HEK293 (cell line): ENCODE measurements at regions of chr3 and their contacts with region 1.

Region 1: DNA sequence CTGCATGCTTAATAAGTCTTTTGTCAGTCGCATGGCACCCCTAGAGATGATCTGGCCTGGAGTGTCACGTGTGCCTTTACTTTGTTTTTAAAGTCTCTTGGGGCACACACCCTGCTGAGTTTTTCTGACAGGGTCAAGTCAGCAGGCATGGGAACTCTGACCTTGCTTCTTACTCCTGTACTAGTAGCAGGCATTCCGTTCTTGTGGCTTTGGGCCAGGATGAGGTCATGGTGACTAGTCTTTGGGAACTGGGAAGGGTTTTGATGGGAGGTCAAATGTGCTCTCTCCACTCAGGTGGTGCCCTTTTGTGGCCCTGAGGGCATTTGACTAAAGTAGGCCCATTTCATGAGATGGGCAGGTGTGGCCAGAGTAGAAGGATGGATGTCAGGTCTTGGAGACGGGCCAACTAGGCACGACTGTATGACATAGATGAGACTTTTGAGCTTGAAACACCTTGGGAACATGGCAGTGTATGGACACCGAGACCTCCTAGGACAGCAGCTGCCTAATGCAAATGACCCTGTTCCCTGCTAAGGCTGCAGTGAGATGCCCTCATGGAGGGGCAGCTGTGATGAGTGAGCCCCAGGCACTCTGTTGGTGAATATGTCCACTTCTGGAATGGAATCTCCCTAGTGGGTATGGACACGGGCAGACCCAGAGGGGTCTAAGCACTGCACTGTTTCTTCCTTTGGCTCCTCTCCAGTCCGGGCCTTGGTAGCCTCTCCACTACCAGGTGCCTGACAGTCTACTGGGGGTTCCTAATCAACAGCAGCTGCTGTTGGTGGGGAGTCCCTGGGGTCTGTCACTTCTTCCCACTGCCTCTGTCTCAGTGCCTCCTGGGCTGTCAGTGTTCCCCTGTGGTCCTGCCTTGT is 16.4 kb downstream of the SRPRB start:
- H3K4me3 ChIP-seq: no peak overlapping the region
- H3K27ac ChIP-seq: no peak overlapping the region
- H3K4me1 ChIP-seq: no peaks in the 10 kb centered on the region
- CTCF ChIP-seq: no peak

Region 2: GRCh38 chr3:133831966-133832802 is 10.2 kb after region 1 on chr3:
- CTCF ChIA-PET with region 1: no interaction called
- POLR2A ChIA-PET with region 1: no interaction called
- H3K4me3 ChIP-seq: no peak overlapping the region
- H3K27ac ChIP-seq: no peak overlapping the region
- H3K4me1 ChIP-seq: no peaks in the 10 kb centered on the region
- CTCF ChIP-seq: no peak

Region 3: GRCh38 chr3:133927540-133928066 is 105.6 kb after region 1 on chr3:
- CTCF ChIA-PET with region 1: interaction called, 45 read pairs
- POLR2A ChIA-PET with region 1: no interaction called
- H3K4me3 ChIP-seq: peak overlapping the region; percentile 15
- H3K27ac ChIP-seq: no peak overlapping the region; the same call in 1 of the 2 replicates
- H3K4me1 ChIP-seq: no peaks in the 10 kb centered on the region
- CTCF ChIP-seq: no peak

Region 4: DNA sequence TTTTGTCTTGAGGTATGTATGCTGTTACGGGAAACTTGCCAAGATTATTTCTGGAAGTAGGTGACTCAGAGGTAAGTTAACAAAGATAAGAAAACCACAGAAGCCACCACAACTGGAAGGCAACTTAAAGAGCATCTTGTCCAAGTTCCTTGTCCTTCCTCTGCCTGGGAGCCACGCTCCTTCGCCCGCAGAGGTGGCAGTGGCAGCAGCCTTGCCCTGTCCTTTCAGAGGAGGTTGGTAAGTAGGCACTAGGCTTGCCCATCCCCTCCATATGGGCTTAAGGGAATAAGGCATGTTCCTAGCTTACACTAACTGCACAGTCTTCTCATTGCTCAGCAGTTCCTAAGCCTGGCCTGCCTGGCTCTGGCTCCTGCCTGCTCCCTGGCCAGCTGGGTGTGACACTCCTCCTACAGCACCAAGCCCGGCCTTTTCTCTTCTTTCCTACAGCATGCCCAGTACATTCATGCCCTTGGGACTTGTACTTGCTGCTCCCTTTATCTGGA is 121.7 kb after region 1 on chr3:
- CTCF ChIA-PET with region 1: no interaction called
- POLR2A ChIA-PET with region 1: no interaction called
- H3K4me3 ChIP-seq: no peak overlapping the region
- H3K27ac ChIP-seq: no peak overlapping the region; the same call in 1 of the 2 replicates
- H3K4me1 ChIP-seq: peaks cover 22% of the 10 kb centered on the region
- CTCF ChIP-seq: no peak